Activated CD4-positive, alpha-beta T cell treated with anti-CD3 and anti-CD28 coated beads, Interleukin-2, amount 10 ng/mL, durations not matched to agents 24 days and 14 days (primary cell): ENCODE measurements at regions of chr5 and their contacts with region 1.

Region 1: GRCh38 chr5:57221049-57221568 is 47.2 kb downstream of the GPBP1 start:
- DNase-seq: peak; percentile 86
- H3K4me3 Mint-ChIP-seq: no peak overlapping the region
- H3K27ac Mint-ChIP-seq: peak overlapping the region; percentile 2
- H3K4me1 Mint-ChIP-seq: peaks cover 21% of the 10 kb centered on the region
- H3K27me3 Mint-ChIP-seq: no peaks in the 10 kb centered on the region

Region 2: GRCh38 chr5:56900858-56901578 is 320.1 kb before region 1 on chr5:
- intact Hi-C with region 1: loop called (anchors 1 kb)
- DNase-seq: peak; percentile 84
- H3K4me3 Mint-ChIP-seq: no peak overlapping the region
- H3K27ac Mint-ChIP-seq: no peak overlapping the region
- H3K4me1 Mint-ChIP-seq: peaks cover 2% of the 10 kb centered on the region
- H3K27me3 Mint-ChIP-seq: peaks cover 16% of the 10 kb centered on the region

Region 3: GRCh38 chr5:56909294-56910209 is 311.6 kb before region 1 on chr5 and contains the start of gene SETD9:
- intact Hi-C with region 1: loop called (anchors 2 kb)
- DNase-seq: peak; percentile 98
- H3K4me3 Mint-ChIP-seq: peak within 1 kb of the TSS; percentile 92
- H3K27ac Mint-ChIP-seq: peak within 1 kb of the TSS; percentile 98
- H3K4me1 Mint-ChIP-seq: peaks cover 21% of the 10 kb centered on the region
- H3K27me3 Mint-ChIP-seq: peaks cover 18% of the 10 kb centered on the region
- total RNA-seq, gene SETD9: 15.9 and 17.0 TPM in 2 replicates

Region 4: DNA sequence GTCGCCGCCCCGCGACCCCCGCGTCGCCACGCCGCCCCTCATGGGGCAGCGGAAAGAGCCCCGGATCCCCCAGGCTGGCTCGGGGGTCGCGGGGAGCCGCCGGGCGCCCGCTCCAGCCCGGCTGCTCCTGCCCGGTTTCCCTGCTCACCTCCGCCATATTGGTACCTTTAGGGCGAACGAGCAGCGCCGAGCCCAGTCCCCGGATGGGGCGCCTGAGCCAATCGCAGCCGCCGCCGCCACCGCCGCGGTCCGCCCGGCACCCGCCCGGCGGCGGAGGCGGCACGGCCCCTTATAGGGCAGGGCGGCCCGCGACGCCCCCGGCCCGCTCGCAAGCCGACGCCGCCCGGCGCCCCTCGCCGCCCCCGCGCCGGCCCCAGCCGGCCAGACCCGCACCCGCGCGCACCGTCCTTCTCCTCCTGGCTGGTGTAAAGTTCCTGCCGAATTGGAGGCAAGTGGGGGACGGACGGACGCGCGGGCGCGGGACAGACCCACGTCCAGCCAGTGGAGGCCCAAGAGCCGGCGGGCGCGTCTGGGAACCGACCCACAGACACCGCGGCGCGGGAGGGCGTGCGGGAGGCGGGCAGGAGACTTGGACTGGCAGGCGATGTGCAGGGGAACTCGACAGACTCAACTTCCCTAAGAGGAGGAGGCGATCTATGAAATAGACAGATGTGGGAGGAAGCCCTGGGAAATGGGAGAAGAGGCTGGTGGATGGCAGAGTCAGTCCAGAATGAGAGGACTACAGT is 269.0 kb before region 1 on chr5 and contains the start of gene MIER3:
- intact Hi-C with region 1: loop called (anchors 1 kb)
- DNase-seq: peak; percentile 95
- H3K4me3 Mint-ChIP-seq: peak within 1 kb of the TSS; percentile 98
- H3K27ac Mint-ChIP-seq: peak within 1 kb of the TSS; percentile 90
- H3K4me1 Mint-ChIP-seq: peaks cover 20% of the 10 kb centered on the region
- H3K27me3 Mint-ChIP-seq: peaks cover 39% of the 10 kb centered on the region
- total RNA-seq, gene MIER3: 35.4 and 37.6 TPM in 2 replicates

Region 5: GRCh38 chr5:57137401-57137800 is 83.7 kb before region 1 on chr5:
- intact Hi-C with region 1: loop called (anchors 1 kb)
- DNase-seq: no peak
- H3K4me3 Mint-ChIP-seq: no peak overlapping the region
- H3K27ac Mint-ChIP-seq: no peak overlapping the region
- H3K4me1 Mint-ChIP-seq: no peaks in the 10 kb centered on the region
- H3K27me3 Mint-ChIP-seq: peaks cover 27% of the 10 kb centered on the region